Activated naive CD4-positive, alpha-beta T cell treated with anti-CD3 and anti-CD28 coated beads for 36 hours (primary cell): ENCODE measurements at regions of chrX and their contacts with region 1.

Region 1: DNA sequence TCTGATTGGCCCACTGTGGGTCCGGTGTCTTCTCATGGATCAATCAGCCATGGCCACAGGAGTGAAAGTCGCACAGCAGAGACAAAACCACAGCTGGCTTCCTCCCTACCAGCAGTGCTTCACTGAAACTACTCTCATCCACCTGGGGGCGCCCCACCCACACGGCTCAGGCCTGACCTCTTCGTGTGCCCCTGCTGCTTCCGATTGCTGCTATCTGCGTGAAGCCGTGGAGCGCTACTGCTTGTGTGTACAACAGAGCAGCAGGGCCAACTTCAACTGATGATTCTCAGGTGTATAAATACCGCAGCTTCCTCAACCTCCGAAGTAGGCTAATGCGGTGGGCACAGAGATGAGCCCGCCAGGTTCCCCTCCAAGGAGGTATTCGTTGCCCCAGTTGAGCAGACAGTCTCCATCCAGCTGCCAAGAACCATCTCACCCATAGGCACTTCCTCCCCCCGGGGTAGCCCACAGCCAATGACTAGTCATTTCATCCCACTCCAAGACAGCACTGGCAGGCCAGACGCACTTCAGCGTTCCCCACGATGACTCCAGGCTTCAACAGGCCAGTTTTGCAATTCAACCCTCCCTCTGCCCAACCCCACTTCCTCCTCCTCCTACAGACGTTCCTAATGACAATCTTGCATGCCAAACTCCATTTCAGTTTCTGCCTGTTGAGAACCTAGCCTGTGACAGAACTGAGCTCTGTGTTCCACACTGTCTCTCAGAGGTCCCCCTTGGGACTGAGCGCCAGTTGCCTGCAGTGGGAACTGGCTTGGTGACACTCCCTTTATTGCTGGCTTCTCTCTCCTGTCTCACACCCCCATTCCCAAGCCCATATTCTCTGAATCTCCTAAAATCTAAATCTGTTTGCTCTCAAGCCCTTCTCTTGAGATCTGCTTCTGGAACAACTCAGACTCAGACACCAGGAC is 41.3 kb upstream of the ATP6AP2 start:
- DNase-seq: peak; percentile 84
- H3K4me3 Mint-ChIP-seq: peak overlapping the region; percentile 32
- H3K27ac Mint-ChIP-seq: no peak overlapping the region
- H3K4me1 Mint-ChIP-seq: peaks cover 20% of the 10 kb centered on the region
- H3K27me3 Mint-ChIP-seq: peaks cover 3% of the 10 kb centered on the region

Region 2: DNA sequence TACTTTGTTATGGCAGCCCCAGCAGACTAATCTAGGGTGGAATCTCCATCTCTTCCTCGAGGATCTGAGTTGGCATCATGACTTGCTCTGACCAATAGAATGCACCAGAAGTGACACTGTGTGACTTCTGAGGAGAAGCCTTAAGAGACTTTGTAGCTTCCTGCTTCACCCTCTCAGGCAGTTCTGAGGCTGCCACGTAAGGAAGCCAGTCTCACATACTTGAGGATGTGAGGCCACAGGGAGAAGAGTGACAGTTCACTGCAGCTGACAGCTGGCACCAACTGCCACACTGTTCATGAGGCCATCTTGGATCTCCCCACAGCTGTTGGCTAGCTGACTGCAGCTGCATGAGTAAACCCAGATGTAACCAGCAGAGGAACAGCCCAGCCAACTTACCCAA is 412.4 kb before region 1 on chrX:
- CTCF ChIA-PET with region 1: no interaction called
- intact Hi-C with region 1: no loop called
- DNase-seq: peak; percentile 49
- H3K4me3 Mint-ChIP-seq: no peak overlapping the region
- H3K27ac Mint-ChIP-seq: peak overlapping the region; percentile 31
- H3K4me1 Mint-ChIP-seq: peaks cover 6% of the 10 kb centered on the region
- H3K27me3 Mint-ChIP-seq: no peaks in the 10 kb centered on the region

Region 3: GRCh38 chrX:40465735-40466551 is 73.5 kb before region 1 on chrX:
- CTCF ChIA-PET with region 1: no interaction called
- intact Hi-C with region 1: no loop called
- DNase-seq: no peak
- H3K4me3 Mint-ChIP-seq: no peak overlapping the region
- H3K27ac Mint-ChIP-seq: no peak overlapping the region
- H3K4me1 Mint-ChIP-seq: peaks cover 25% of the 10 kb centered on the region
- H3K27me3 Mint-ChIP-seq: no peaks in the 10 kb centered on the region

Region 4: GRCh38 chrX:40552768-40553167 is 13.3 kb after region 1 on chrX:
- CTCF ChIA-PET with region 1: interaction called, 12 read pairs
- intact Hi-C with region 1: no loop called
- DNase-seq: no peak
- H3K4me3 Mint-ChIP-seq: no peak overlapping the region
- H3K27ac Mint-ChIP-seq: no peak overlapping the region
- H3K4me1 Mint-ChIP-seq: no peaks in the 10 kb centered on the region
- H3K27me3 Mint-ChIP-seq: no peaks in the 10 kb centered on the region

Region 5: DNA sequence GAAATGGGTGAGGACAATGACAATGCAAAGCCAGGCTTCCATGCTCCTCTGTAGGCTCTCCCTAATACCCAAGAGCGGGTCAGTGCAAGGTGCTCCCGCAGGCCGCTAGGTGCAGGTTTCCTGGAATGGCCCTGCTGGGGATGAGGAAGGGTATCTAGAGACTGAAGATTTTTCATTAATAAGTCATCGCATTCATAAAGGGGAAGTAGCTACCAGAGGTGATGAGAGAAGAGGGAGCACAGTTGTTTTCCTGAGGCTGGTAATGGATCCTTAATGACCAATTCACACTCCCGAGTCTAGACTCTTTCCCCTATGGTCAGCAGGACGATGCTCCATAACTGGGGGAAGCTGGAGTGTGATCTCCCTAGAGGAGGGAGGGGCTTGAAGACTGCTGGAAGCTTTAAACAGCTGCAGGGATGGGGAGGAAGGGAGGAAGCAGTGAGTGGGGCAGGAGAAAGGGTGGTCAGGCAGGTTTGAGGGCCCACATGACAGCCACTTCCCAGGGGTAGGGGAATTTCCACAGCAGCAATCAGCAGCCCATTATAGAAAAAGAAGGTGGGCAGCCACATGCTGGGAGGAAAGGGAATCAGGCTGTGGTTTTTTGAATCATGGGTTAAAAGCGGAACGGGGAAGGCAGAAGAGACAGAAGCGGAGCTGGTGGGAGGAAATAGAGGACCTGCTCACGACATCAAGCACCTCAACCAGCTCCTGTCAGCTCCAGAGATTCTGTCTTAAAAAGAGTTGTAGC is 31.0 kb after region 1 on chrX:
- CTCF ChIA-PET with region 1: interaction called, 13 read pairs
- intact Hi-C with region 1: no loop called
- DNase-seq: peak; percentile 22
- H3K4me3 Mint-ChIP-seq: peak overlapping the region; percentile 70
- H3K27ac Mint-ChIP-seq: peak overlapping the region; percentile 89
- H3K4me1 Mint-ChIP-seq: peaks cover 19% of the 10 kb centered on the region
- H3K27me3 Mint-ChIP-seq: no peaks in the 10 kb centered on the region

Region 6: DNA sequence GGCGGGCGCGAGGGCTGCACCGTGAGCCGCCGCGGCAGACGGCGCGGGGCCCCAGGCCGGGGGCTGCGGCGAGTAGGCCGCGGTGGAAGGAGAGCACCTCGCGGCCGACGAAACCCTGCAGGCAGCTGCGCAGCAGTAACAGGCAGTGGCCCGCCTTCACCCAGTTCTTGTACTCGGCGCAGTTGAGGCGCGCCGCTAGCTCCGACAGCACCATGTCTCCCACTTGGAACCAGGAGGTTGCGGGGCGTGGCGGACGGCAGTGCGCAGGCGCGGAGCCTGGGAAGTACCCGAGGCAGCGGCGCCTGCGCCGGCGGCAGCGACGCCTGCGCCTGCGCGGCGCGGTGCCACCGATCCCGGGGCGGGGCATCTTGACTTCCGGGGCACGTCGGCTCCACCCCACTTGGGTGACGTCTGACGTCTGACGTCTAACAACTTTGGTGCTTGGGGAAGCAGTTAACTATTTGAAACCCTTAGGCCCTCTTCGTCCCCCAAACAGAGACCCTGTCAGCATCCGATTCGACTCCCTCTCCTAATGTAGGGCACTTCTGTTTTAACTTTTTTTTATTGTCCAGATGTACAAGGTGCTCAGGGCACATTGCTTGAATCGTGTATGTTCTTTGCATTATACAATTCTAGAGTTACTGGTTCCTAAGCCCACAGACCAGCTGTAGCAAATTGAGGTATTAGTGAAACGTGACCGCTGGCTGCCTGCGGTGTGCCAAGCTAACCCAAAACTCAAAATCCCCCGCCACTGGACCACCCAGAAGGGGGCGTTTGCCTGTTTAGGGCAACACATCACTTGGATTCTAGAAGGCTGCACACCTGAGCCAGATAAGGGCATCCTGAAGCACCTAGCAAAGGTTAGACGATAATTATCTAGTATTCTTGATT is 108.1 kb after region 1 on chrX and contains the start of gene CXorf38:
- CTCF ChIA-PET with region 1: interaction called, 14 read pairs
- intact Hi-C with region 1: loop called (anchors 1 kb)
- DNase-seq: peak; percentile 94
- H3K4me3 Mint-ChIP-seq: peak within 1 kb of the TSS; percentile 84
- H3K27ac Mint-ChIP-seq: peak within 1 kb of the TSS; percentile 91
- H3K4me1 Mint-ChIP-seq: peaks cover 25% of the 10 kb centered on the region
- H3K27me3 Mint-ChIP-seq: no peaks in the 10 kb centered on the region
- total RNA-seq, gene CXorf38: 23.2 to 23.3 TPM

Region 7: DNA sequence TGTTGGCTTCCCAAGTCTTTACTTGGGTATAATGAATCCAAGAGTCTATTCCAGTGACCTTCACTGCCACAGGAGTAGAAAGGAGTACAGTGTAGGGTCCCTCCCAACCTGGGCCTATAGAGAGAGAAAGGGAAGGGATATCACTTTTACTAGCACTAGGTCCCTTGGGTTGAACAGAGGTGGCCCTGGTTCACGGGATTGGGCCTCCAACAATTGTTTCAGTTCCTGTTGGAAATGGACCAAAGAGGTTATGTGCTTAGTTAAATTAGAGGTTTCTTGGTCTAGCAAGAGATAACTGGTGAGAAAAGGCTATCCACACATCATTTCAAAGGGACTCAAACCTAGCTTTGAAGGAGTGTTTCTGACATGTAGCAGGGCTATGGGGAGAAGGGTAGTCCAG is 253.0 kb after region 1 on chrX:
- CTCF ChIA-PET with region 1: interaction called, 18 read pairs
- intact Hi-C with region 1: loop called (anchors 1 kb)
- DNase-seq: no peak
- H3K4me3 Mint-ChIP-seq: no peak overlapping the region
- H3K27ac Mint-ChIP-seq: no peak overlapping the region
- H3K4me1 Mint-ChIP-seq: peaks cover 1% of the 10 kb centered on the region
- H3K27me3 Mint-ChIP-seq: no peaks in the 10 kb centered on the region

Region 8: DNA sequence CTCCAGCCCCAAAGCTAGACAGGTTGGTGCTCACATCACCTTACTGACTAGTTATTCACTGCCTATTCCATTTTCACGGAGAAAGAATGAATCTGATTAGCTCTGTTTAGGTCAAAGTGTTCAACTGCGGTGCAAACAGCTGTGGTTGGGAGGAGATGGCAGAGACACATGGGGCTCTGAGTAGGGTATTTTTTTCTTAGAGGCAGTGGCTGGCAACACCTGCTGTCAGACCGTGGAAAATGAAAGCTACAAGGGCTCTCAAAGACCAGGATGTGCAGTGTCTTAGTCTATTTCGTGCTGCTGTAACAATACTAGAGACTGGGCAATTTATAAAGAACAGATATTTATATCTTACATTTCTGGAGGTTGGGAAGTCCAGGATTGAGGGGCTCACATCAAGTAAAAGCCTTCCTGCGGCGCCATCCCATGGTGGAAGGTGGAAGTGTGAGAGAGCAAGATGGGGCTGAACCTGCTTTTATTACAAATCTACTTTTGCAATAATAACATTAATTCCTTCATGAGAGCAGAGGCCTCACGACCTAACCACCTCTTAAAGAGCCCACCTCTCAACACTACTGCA is 918.2 kb after region 1 on chrX:
- CTCF ChIA-PET with region 1: no interaction called
- intact Hi-C with region 1: no loop called
- DNase-seq: peak; percentile 48
- H3K4me3 Mint-ChIP-seq: no peak overlapping the region
- H3K27ac Mint-ChIP-seq: no peak overlapping the region
- H3K4me1 Mint-ChIP-seq: no peaks in the 10 kb centered on the region
- H3K27me3 Mint-ChIP-seq: no peaks in the 10 kb centered on the region